Activated CD8-positive, alpha-beta memory T cell treated with anti-CD3 and anti-CD28 coated beads, Interleukin-2, amount 10 ng/mL, durations not matched to agents 7 days and 5 days (primary cell): ENCODE measurements at regions of chr2 and their contacts with region 1.

Region 1: GRCh38 chr2:1550658-1551316 is 137.5 kb downstream of the TPO start:
- DNase-seq: peak; percentile 55
- ATAC-seq: peak; percentile 83
- H3K4me3 Mint-ChIP-seq: no peak overlapping the region
- H3K27ac Mint-ChIP-seq: no peak overlapping the region
- H3K4me1 Mint-ChIP-seq: peaks cover 2% of the 10 kb centered on the region
- H3K27me3 Mint-ChIP-seq: no peaks in the 10 kb centered on the region

Region 2: GRCh38 chr2:1561811-1562421 is 11.1 kb after region 1 on chr2:
- CTCF ChIA-PET with region 1: interaction called, 10 read pairs
- DNase-seq: no peak
- ATAC-seq: no peak
- H3K4me3 Mint-ChIP-seq: no peak overlapping the region
- H3K27ac Mint-ChIP-seq: no peak overlapping the region
- H3K4me1 Mint-ChIP-seq: peaks cover 10% of the 10 kb centered on the region
- H3K27me3 Mint-ChIP-seq: no peaks in the 10 kb centered on the region